Heart left ventricle (tissue), 16 donors: ENCODE measurements at regions of chr11 and their contacts with region 1.

Region 1: GRCh38 chr11:60831143-60831500 is 10.8 kb upstream of the CCDC86 start:
- DNase-seq: peak; percentile 74 to 89 (median 85)
- ATAC-seq: peak; percentile 86 to 93 (median 90)
- H3K4me3 ChIP-seq: no peak overlapping the region
- H3K27ac ChIP-seq: no peak overlapping the region
- H3K4me1 ChIP-seq: peaks cover 0 to 18% (median 1%) of the 10 kb centered on the region in 12 donors
- H3K27me3 ChIP-seq: no peaks in the 10 kb centered on the region
- CTCF ChIP-seq: peak; percentile 86 to 97 (median 95)
- POLR2A ChIP-seq: no peak

Region 2: GRCh38 chr11:60887556-60887955 is 56.4 kb after region 1 on chr11:
- intact Hi-C with region 1: loop called in 6 of 10 experiments (anchors 1 to 2 kb)
- DNase-seq: no peak
- ATAC-seq: peak; percentile 65 to 86 (median 80)
- H3K4me3 ChIP-seq: no peak overlapping the region
- H3K27ac ChIP-seq: no peak overlapping the region
- H3K4me1 ChIP-seq: peaks cover 0 to 23% (median 12%) of the 10 kb centered on the region in 12 donors
- H3K27me3 ChIP-seq: no peaks in the 10 kb centered on the region
- CTCF ChIP-seq: peak; percentile 33 to 63 (median 54)
- POLR2A ChIP-seq: no peak

Region 3: DNA sequence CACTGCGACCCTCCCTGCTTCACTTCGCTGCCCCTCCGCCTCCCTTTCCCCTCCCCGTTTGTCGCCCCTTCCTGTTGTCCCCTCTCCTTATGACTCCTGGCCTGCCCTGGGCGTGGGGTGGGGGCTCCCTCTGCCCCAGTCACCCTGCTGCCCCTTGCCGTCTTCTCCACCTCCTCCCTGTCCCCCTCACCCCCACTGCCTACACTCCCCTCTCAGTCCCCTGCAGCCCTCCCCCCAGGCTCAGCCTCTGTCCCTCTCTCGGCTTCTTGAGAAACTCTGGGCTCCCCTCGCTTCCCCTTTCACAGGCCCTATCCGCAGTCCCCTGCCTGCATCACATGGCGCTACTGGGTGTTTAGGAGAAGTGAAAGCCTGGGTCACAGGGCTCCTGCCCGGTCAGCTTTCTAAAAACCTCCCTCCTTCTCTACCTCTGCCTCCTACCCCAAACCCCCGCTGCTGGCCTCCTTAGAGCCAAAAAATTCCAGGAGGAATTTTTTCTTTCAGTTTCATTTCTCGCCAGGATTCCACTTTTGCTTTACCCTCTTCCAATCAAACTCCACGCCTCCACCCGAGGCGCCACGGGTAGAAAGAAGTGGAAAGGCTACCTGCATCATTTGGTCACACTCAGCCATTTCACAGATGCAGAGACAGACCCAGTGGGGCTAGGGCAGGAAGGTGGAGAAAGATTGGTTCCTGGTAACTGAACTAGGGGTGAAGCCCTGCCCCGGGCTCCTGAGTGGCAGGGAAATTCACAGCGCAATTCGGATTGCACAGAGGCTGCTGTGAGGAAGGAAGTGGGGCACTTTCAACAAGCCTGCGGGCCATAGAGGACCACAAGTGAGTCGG is 121.0 kb after region 1 on chr11 and contains the start of gene SLC15A3:
- intact Hi-C with region 1: loop called in 2 of 10 experiments (anchors 5 kb)
- DNase-seq: peak; percentile 70 to 84 (median 77)
- ATAC-seq: peak; percentile 67 to 86 (median 78)
- H3K4me3 ChIP-seq: peak within 1 kb of the TSS; percentile 45 to 77 (median 58)
- H3K27ac ChIP-seq: peak within 1 kb of the TSS; percentile 67 to 96 (median 87)
- H3K4me1 ChIP-seq: peaks cover 0 to 65% (median 15%) of the 10 kb centered on the region in 12 donors
- H3K27me3 ChIP-seq: peaks cover 0 to 5% (median 0%) of the 10 kb centered on the region in 9 donors
- CTCF ChIP-seq: no peak
- POLR2A ChIP-seq: peak in 1 of 2 donors; percentile 9
- total RNA-seq, gene SLC15A3: 11.9 to 85.1 (median 19.1) TPM

Region 4: GRCh38 chr11:60985991-60986915 is 155.1 kb after region 1 on chr11:
- intact Hi-C with region 1: no loop called
- DNase-seq: no peak
- ATAC-seq: no peak
- H3K4me3 ChIP-seq: peak overlapping the region in 1 of 12 donors; percentile 13
- H3K27ac ChIP-seq: peak overlapping the region in 1 of 12 donors; percentile 54
- H3K4me1 ChIP-seq: peaks cover 0 to 9% (median 0%) of the 10 kb centered on the region in 12 donors
- H3K27me3 ChIP-seq: peaks cover 0 to 12% (median 0%) of the 10 kb centered on the region in 9 donors
- CTCF ChIP-seq: no peak
- POLR2A ChIP-seq: no peak

Region 5: GRCh38 chr11:61161190-61162091 is 330.3 kb after region 1 on chr11 and contains the start of gene VPS37C:
- intact Hi-C with region 1: loop called in 1 of 10 experiments (anchors 10 kb)
- DNase-seq: peak; percentile 87 to 96 (median 90)
- ATAC-seq: peak; percentile 97 to 98 (median 98)
- H3K4me3 ChIP-seq: peak within 1 kb of the TSS; percentile 66 to 97 (median 82)
- H3K27ac ChIP-seq: peak within 1 kb of the TSS; percentile 90 to 99 (median 98)
- H3K4me1 ChIP-seq: peaks cover 0 to 67% (median 23%) of the 10 kb centered on the region in 12 donors
- H3K27me3 ChIP-seq: no peaks in the 10 kb centered on the region
- CTCF ChIP-seq: peak in 8 of 12 donors; percentile 13 to 57 (median 32)
- POLR2A ChIP-seq: peak in 1 of 2 donors; percentile 70
- total RNA-seq, gene VPS37C: 11.4 to 27.6 (median 17.1) TPM